Natural killer cell (primary cell): ENCODE measurements at regions of chr12 and their contacts with region 1.

Region 1: GRCh38 chr12:40312982-40313576 is 88.3 kb downstream of the LRRK2 start:
- DNase-seq: peak in 1 of 2 donors; percentile 3
- ATAC-seq: no peak
- H3K4me3 ChIP-seq: no peak overlapping the region
- H3K4me3 Mint-ChIP-seq: no peak overlapping the region
- H3K27ac ChIP-seq: no peak overlapping the region
- H3K27ac Mint-ChIP-seq: no peak overlapping the region
- H3K4me1 ChIP-seq: no peaks in the 10 kb centered on the region
- H3K4me1 Mint-ChIP-seq: no peaks in the 10 kb centered on the region
- H3K27me3 ChIP-seq: no peaks in the 10 kb centered on the region
- H3K27me3 Mint-ChIP-seq: no peaks in the 10 kb centered on the region
- CTCF ChIP-seq: no peak

Region 2: DNA sequence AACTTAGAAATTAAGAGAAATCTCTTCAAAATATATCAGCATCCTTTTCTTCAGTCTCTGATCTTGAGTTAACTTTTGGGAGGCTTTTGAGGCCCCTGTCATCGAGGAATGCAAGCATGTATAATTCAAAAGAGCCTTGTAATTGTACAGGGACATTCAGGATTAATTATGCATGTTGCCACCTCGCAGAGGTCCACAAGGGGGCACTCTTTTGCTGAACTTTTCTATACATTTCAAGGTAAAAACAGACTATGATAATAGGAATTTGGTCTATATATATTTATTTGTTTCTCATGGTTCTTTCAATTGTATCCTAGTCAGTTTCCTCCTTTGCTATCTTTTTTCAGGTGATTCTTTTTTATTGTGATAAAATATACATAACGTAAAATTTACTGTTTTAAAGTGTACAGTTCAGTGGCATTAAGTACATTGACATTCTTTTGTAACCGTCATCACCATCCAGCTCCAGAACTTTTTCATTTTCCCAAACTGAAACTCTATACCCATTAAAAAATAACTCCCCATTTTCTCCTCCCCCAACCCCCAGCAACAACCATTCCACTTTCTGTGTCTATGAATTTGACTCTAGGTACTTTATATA is 160.2 kb before region 1 on chr12:
- intact Hi-C with region 1: loop called (anchors 2 kb)
- DNase-seq: peak in 1 of 2 donors; percentile 67
- ATAC-seq: peak; percentile 44 to 59 (median 54)
- H3K4me3 ChIP-seq: no peak overlapping the region
- H3K4me3 Mint-ChIP-seq: no peak overlapping the region
- H3K27ac ChIP-seq: no peak overlapping the region
- H3K27ac Mint-ChIP-seq: no peak overlapping the region
- H3K4me1 ChIP-seq: no peaks in the 10 kb centered on the region
- H3K4me1 Mint-ChIP-seq: no peaks in the 10 kb centered on the region
- H3K27me3 ChIP-seq: no peaks in the 10 kb centered on the region
- H3K27me3 Mint-ChIP-seq: no peaks in the 10 kb centered on the region
- CTCF ChIP-seq: peak; percentile 82